Panc1 (cell line): ENCODE measurements at regions of chr13 and their contacts with region 1.

Region 1: GRCh38 chr13:98419848-98420553 is 156.9 kb downstream of the STK24 start:
- DNase-seq: no peak
- ATAC-seq: no peak
- H3K4me3 ChIP-seq: no peak overlapping the region
- H3K27ac ChIP-seq: no peak overlapping the region
- H3K4me1 ChIP-seq: no peaks in the 10 kb centered on the region
- H3K27me3 ChIP-seq: no peaks in the 10 kb centered on the region
- CTCF ChIP-seq: no peak

Region 2: GRCh38 chr13:98345107-98345506 is 74.9 kb before region 1 on chr13:
- CTCF ChIA-PET with region 1: no interaction called
- POLR2A ChIA-PET with region 1: no interaction called
- in situ Hi-C with region 1: no loop called
- intact Hi-C with region 1: no loop called
- DNase-seq: no peak
- ATAC-seq: no peak
- H3K4me3 ChIP-seq: no peak overlapping the region
- H3K27ac ChIP-seq: no peak overlapping the region
- H3K4me1 ChIP-seq: no peaks in the 10 kb centered on the region
- H3K27me3 ChIP-seq: no peaks in the 10 kb centered on the region
- CTCF ChIP-seq: no peak

Region 3: GRCh38 chr13:98473135-98473787 is 53.3 kb after region 1 on chr13:
- CTCF ChIA-PET with region 1: no interaction called
- POLR2A ChIA-PET with region 1: interaction called, 10 read pairs
- in situ Hi-C with region 1: no loop called
- intact Hi-C with region 1: no loop called
- DNase-seq: no peak
- ATAC-seq: no peak
- H3K4me3 ChIP-seq: no peak overlapping the region
- H3K27ac ChIP-seq: no peak overlapping the region
- H3K4me1 ChIP-seq: peaks cover 3% of the 10 kb centered on the region; the same call in 1 of the 2 replicates
- H3K27me3 ChIP-seq: no peaks in the 10 kb centered on the region
- CTCF ChIP-seq: no peak